CD8-positive, alpha-beta T cell (primary cell): ENCODE measurements at regions of chr10 and their contacts with region 1.

Region 1: GRCh38 chr10:93352638-93353383 is 129.3 kb downstream of the MYOF start:
- DNase-seq: peak in 2 of 9 experiments; percentile 35 to 50
- ATAC-seq: no peak
- H3K4me3 ChIP-seq: no peak overlapping the region
- H3K4me3 Mint-ChIP-seq: no peak overlapping the region
- H3K27ac ChIP-seq: no peak overlapping the region
- H3K27ac Mint-ChIP-seq: no peak overlapping the region
- H3K4me1 ChIP-seq: no peaks in the 10 kb centered on the region
- H3K4me1 Mint-ChIP-seq: no peaks in the 10 kb centered on the region
- H3K27me3 ChIP-seq: no peaks in the 10 kb centered on the region
- H3K27me3 Mint-ChIP-seq: peaks cover 21% of the 10 kb centered on the region
- CTCF ChIP-seq: peak; percentile 75

Region 2: DNA sequence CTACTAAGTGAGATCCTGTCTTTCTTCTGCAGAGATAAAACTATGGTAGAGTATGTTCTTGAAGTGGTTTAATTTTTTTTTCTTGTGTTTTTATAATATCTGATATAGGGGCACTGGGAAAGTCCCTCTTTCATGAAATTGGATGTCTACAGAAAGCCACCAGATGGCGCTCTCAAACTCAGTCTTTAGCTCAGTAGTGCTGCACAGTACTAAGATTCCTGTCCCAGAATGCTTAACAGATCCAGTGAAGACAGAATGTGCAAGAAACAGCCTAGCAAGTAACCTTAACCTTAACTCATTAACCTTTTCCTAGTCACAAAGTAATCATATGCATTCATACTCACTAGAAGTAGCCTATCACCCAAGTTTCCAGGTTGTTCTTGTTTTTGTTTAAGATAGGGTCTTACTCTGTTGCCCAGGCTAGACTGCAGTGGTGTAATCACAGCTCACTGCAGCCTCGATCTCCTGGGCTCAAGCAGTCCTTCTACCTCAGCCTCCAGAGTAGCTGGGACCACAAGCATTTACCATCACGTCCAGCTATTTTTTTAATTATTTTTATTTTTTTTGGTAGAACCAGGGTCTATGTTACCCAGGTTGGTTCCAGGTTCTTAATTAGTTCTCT is 835.7 kb before region 1 on chr10:
- CTCF ChIA-PET with region 1: no interaction called
- POLR2A ChIA-PET with region 1: no interaction called
- intact Hi-C with region 1: loop called in 1 of 2 experiments (anchors 5 kb)
- DNase-seq: peak; percentile 38 to 89 (median 73)
- ATAC-seq: peak; percentile 99
- H3K4me3 ChIP-seq: no peak overlapping the region
- H3K4me3 Mint-ChIP-seq: no peak overlapping the region
- H3K27ac ChIP-seq: peak overlapping the region in 1 of 2 experiments; percentile 7
- H3K27ac Mint-ChIP-seq: no peak overlapping the region
- H3K4me1 ChIP-seq: no peaks in the 10 kb centered on the region
- H3K4me1 Mint-ChIP-seq: peaks cover 8% of the 10 kb centered on the region
- H3K27me3 ChIP-seq: no peaks in the 10 kb centered on the region
- H3K27me3 Mint-ChIP-seq: no peaks in the 10 kb centered on the region
- CTCF ChIP-seq: peak; percentile 81

Region 3: GRCh38 chr10:92799591-92800446 is 553.0 kb before region 1 on chr10:
- CTCF ChIA-PET with region 1: no interaction called
- POLR2A ChIA-PET with region 1: no interaction called
- intact Hi-C with region 1: no loop called
- DNase-seq: no peak
- ATAC-seq: no peak
- H3K4me3 ChIP-seq: no peak overlapping the region
- H3K4me3 Mint-ChIP-seq: no peak overlapping the region
- H3K27ac ChIP-seq: no peak overlapping the region
- H3K27ac Mint-ChIP-seq: no peak overlapping the region
- H3K4me1 ChIP-seq: no peaks in the 10 kb centered on the region
- H3K4me1 Mint-ChIP-seq: no peaks in the 10 kb centered on the region
- H3K27me3 ChIP-seq: no peaks in the 10 kb centered on the region
- H3K27me3 Mint-ChIP-seq: no peaks in the 10 kb centered on the region
- CTCF ChIP-seq: no peak

Region 4: GRCh38 chr10:92839191-92840085 is 513.4 kb before region 1 on chr10:
- CTCF ChIA-PET with region 1: interaction called, 4 read pairs
- POLR2A ChIA-PET with region 1: no interaction called
- intact Hi-C with region 1: loop called (anchors 2 kb)
- DNase-seq: peak in 7 of 9 experiments; percentile 14 to 57 (median 46)
- ATAC-seq: no peak
- H3K4me3 ChIP-seq: no peak overlapping the region
- H3K4me3 Mint-ChIP-seq: no peak overlapping the region
- H3K27ac ChIP-seq: no peak overlapping the region
- H3K27ac Mint-ChIP-seq: no peak overlapping the region
- H3K4me1 ChIP-seq: no peaks in the 10 kb centered on the region
- H3K4me1 Mint-ChIP-seq: no peaks in the 10 kb centered on the region
- H3K27me3 ChIP-seq: no peaks in the 10 kb centered on the region
- H3K27me3 Mint-ChIP-seq: no peaks in the 10 kb centered on the region
- CTCF ChIP-seq: peak; percentile 41

Region 5: GRCh38 chr10:92886334-92886961 is 466.4 kb before region 1 on chr10:
- CTCF ChIA-PET with region 1: interaction called, 18 read pairs
- POLR2A ChIA-PET with region 1: no interaction called
- intact Hi-C with region 1: loop called in 1 of 2 experiments (anchors 1 kb)
- DNase-seq: no peak
- ATAC-seq: no peak
- H3K4me3 ChIP-seq: no peak overlapping the region
- H3K4me3 Mint-ChIP-seq: no peak overlapping the region
- H3K27ac ChIP-seq: no peak overlapping the region
- H3K27ac Mint-ChIP-seq: no peak overlapping the region
- H3K4me1 ChIP-seq: no peaks in the 10 kb centered on the region
- H3K4me1 Mint-ChIP-seq: peaks cover 5% of the 10 kb centered on the region
- H3K27me3 ChIP-seq: no peaks in the 10 kb centered on the region
- H3K27me3 Mint-ChIP-seq: no peaks in the 10 kb centered on the region
- CTCF ChIP-seq: no peak

Region 6: GRCh38 chr10:93080350-93081046 is 272.3 kb before region 1 on chr10:
- CTCF ChIA-PET with region 1: interaction called, 25 read pairs
- POLR2A ChIA-PET with region 1: no interaction called
- intact Hi-C with region 1: loop called in 1 of 2 experiments (anchors 1 kb)
- DNase-seq: peak in 8 of 9 experiments; percentile 23 to 63 (median 50)
- ATAC-seq: no peak
- H3K4me3 ChIP-seq: no peak overlapping the region
- H3K4me3 Mint-ChIP-seq: no peak overlapping the region
- H3K27ac ChIP-seq: no peak overlapping the region
- H3K27ac Mint-ChIP-seq: no peak overlapping the region
- H3K4me1 ChIP-seq: no peaks in the 10 kb centered on the region
- H3K4me1 Mint-ChIP-seq: peaks cover 5% of the 10 kb centered on the region
- H3K27me3 ChIP-seq: peaks cover 0 to 4% of the 10 kb centered on the region in 2 experiments
- H3K27me3 Mint-ChIP-seq: peaks cover 42% of the 10 kb centered on the region
- CTCF ChIP-seq: peak; percentile 59

Region 7: DNA sequence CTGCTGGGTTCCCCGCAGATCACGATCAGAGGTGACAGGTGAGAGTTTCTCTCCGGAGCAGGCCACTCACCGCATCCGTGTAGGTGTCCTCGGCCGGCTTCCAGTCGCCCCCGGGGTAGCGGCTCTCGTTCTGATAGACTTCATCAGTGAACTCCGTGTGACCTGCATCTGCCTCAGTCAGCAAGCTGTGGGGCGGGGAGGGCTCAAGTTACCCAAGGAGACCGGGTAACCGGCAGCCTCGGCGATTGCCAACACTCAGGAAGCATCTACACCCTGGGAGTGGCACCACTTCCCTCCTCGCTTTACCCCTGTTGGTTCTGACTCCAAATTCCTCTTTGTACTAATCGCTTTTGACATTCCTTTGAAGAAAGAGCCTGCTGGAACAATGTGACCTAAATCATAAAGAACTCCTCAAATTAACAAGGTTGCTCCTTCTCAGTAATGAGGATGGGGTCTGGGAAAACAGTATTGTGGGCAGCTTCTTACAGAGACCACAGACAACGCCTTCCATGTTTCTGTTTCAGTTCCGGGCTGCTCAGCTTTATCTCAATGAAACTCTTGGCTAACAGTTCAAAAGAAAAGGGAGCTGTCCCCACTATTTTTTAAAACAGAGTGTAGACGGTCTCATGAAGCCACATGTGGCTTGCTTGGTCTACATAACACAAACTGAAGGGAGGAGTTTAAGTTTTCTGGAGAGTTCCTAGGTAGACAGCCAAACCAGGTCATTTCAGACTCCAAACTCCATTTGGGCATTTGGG is 11.3 kb after region 1 on chr10:
- CTCF ChIA-PET with region 1: interaction called, 12 read pairs
- POLR2A ChIA-PET with region 1: no interaction called
- intact Hi-C with region 1: no loop called
- DNase-seq: no peak
- ATAC-seq: no peak
- H3K4me3 ChIP-seq: no peak overlapping the region
- H3K4me3 Mint-ChIP-seq: no peak overlapping the region
- H3K27ac ChIP-seq: no peak overlapping the region
- H3K27ac Mint-ChIP-seq: no peak overlapping the region
- H3K4me1 ChIP-seq: no peaks in the 10 kb centered on the region
- H3K4me1 Mint-ChIP-seq: no peaks in the 10 kb centered on the region
- H3K27me3 ChIP-seq: no peaks in the 10 kb centered on the region
- H3K27me3 Mint-ChIP-seq: peaks cover 6% of the 10 kb centered on the region
- CTCF ChIP-seq: no peak